CD14-positive monocyte (primary cell): ENCODE measurements at regions of chr6 and their contacts with region 1.

Region 1: DNA sequence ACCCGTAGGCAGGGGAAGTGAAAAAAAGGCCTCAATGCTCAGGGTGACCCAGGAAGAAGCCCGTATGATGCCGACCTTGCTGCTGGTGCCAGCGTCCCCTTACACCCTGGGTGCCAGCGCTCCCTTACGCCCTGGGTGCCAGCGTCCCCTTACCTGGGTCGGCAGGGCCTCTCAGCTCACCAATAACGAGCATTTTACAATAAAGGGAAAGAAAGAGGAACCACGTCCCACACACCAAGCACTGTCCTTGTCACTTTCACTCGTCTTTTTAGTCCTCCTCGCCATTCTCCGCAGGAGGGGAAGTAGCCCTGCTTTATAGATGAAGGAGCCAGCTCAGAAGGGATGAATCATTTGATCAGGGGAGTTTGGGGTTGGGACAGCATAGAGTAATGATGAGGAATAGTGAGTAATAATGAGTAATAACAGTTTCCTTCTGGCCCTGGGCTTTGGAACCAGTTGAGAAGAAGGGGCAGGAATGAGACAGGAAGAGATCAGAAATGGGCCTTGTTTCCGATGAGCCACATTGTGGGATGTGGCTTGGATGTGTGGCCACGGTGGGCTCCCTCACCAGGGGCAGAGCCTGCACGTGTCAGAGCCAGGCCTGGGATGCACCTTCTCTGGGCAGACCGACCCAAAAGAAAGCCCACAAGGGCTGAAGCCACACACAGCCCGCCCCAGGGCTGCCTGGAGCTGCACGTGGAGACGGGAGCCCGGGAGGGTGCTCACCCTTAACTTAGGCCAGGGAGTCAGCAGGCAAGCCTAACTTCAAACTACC is 75.7 kb downstream of the SYNJ2 start:
- DNase-seq: peak; percentile 94 to 99 (median 96)
- H3K4me3 ChIP-seq: peak overlapping the region in 1 of 3 experiments; percentile 8
- H3K4me3 Mint-ChIP-seq: peak overlapping the region; percentile 32 to 56
- H3K27ac ChIP-seq: peak overlapping the region; percentile 88 to 93
- H3K27ac Mint-ChIP-seq: peak overlapping the region; percentile 88 to 98 (median 95)
- H3K4me1 ChIP-seq: peaks cover 40 to 42% of the 10 kb centered on the region in 2 donors
- H3K4me1 Mint-ChIP-seq: peaks cover 31% of the 10 kb centered on the region
- H3K27me3 ChIP-seq: no peaks in the 10 kb centered on the region
- H3K27me3 Mint-ChIP-seq: peaks cover 1 to 3% (median 2%) of the 10 kb centered on the region in 3 donors
- CTCF ChIP-seq: no peak

Region 2: GRCh38 chr6:158020272-158020711 is 37.1 kb before region 1 on chr6:
- intact Hi-C with region 1: loop called in 1 of 2 experiments (anchors 5 kb)
- DNase-seq: peak in 1 of 3 donors; percentile 10
- H3K4me3 ChIP-seq: no peak overlapping the region
- H3K4me3 Mint-ChIP-seq: no peak overlapping the region
- H3K27ac ChIP-seq: no peak overlapping the region
- H3K27ac Mint-ChIP-seq: no peak overlapping the region
- H3K4me1 ChIP-seq: peaks cover 0 to 6% of the 10 kb centered on the region in 2 donors
- H3K4me1 Mint-ChIP-seq: peaks cover 2% of the 10 kb centered on the region
- H3K27me3 ChIP-seq: no peaks in the 10 kb centered on the region
- H3K27me3 Mint-ChIP-seq: peaks cover 0 to 2% (median 0%) of the 10 kb centered on the region in 3 donors
- CTCF ChIP-seq: no peak

Region 3: GRCh38 chr6:158121335-158121734 is 63.9 kb after region 1 on chr6:
- intact Hi-C with region 1: no loop called
- DNase-seq: no peak
- H3K4me3 ChIP-seq: no peak overlapping the region
- H3K4me3 Mint-ChIP-seq: no peak overlapping the region
- H3K27ac ChIP-seq: no peak overlapping the region
- H3K27ac Mint-ChIP-seq: peak overlapping the region in 1 of 7 donors; percentile 31
- H3K4me1 ChIP-seq: no peaks in the 10 kb centered on the region
- H3K4me1 Mint-ChIP-seq: no peaks in the 10 kb centered on the region
- H3K27me3 ChIP-seq: no peaks in the 10 kb centered on the region
- H3K27me3 Mint-ChIP-seq: no peaks in the 10 kb centered on the region
- CTCF ChIP-seq: no peak

Region 4: GRCh38 chr6:158131926-158132325 is 74.5 kb after region 1 on chr6:
- intact Hi-C with region 1: no loop called
- DNase-seq: peak; percentile 15 to 45 (median 38)
- H3K4me3 ChIP-seq: no peak overlapping the region
- H3K4me3 Mint-ChIP-seq: no peak overlapping the region
- H3K27ac ChIP-seq: no peak overlapping the region
- H3K27ac Mint-ChIP-seq: no peak overlapping the region
- H3K4me1 ChIP-seq: no peaks in the 10 kb centered on the region
- H3K4me1 Mint-ChIP-seq: no peaks in the 10 kb centered on the region
- H3K27me3 ChIP-seq: no peaks in the 10 kb centered on the region
- H3K27me3 Mint-ChIP-seq: no peaks in the 10 kb centered on the region
- CTCF ChIP-seq: peak; percentile 70

Region 5: DNA sequence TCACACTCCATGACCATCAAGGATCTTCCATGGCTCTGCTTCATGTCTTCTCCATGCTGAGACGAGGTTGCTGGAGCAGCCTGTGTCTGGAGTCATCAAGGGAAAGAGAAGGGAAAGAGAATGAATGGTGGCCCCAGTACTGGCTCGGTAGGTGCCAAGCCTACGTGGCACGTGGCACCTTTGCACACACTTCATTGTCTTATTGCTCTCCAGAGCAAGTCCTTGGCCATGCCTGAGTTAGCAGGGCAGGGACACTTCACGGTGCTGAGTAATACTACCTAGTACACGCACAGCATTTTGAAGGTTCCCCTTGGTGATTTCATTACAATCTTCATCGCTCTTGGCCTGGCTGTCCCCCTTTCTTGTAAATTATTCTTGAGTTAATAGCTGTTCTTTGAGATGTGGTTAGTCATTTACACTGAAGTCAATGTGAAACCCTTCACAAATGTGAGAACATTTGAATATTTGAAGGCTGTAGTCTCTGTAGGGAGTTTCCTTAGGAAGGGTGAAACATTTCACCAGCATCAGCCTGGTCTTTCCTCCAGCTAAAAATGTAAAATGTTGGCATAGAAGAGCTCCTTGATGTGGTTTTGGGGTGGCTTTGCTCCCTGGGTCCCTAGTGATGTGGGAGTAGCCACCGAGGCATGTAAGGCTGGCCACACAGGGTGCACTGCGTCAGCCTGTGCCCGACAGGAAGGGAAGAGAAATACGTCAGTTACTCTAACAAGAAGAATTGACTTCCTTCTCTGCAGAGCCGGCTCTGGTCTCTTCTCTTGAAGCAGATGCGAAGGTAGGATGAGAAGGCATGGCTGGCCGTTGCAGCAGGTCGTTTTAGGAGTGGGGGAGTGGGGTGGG is 592.1 kb after region 1 on chr6 and contains the start of gene SYTL3:
- intact Hi-C with region 1: loop called in 1 of 2 experiments (anchors 10 kb)
- DNase-seq: peak; percentile 86 to 90 (median 88)
- H3K4me3 ChIP-seq: peak within 1 kb of the TSS in 1 of 3 experiments; percentile 50
- H3K4me3 Mint-ChIP-seq: peak within 1 kb of the TSS; percentile 62 to 68
- H3K27ac ChIP-seq: peak within 1 kb of the TSS; percentile 66 to 93
- H3K27ac Mint-ChIP-seq: peak within 1 kb of the TSS; percentile 94 to 97 (median 95)
- H3K4me1 ChIP-seq: peaks cover 47 to 53% of the 10 kb centered on the region in 2 donors
- H3K4me1 Mint-ChIP-seq: peaks cover 54% of the 10 kb centered on the region
- H3K27me3 ChIP-seq: no peaks in the 10 kb centered on the region
- H3K27me3 Mint-ChIP-seq: peaks cover 0 to 6% (median 0%) of the 10 kb centered on the region in 3 donors
- CTCF ChIP-seq: no peak
- polyA plus RNA-seq, gene SYTL3: 14.6 to 18.7 (median 14.8) TPM